Common myeloid progenitor, CD34-positive (primary cell): ENCODE measurements at regions of chr14 and their contacts with region 1.

Region 1: DNA sequence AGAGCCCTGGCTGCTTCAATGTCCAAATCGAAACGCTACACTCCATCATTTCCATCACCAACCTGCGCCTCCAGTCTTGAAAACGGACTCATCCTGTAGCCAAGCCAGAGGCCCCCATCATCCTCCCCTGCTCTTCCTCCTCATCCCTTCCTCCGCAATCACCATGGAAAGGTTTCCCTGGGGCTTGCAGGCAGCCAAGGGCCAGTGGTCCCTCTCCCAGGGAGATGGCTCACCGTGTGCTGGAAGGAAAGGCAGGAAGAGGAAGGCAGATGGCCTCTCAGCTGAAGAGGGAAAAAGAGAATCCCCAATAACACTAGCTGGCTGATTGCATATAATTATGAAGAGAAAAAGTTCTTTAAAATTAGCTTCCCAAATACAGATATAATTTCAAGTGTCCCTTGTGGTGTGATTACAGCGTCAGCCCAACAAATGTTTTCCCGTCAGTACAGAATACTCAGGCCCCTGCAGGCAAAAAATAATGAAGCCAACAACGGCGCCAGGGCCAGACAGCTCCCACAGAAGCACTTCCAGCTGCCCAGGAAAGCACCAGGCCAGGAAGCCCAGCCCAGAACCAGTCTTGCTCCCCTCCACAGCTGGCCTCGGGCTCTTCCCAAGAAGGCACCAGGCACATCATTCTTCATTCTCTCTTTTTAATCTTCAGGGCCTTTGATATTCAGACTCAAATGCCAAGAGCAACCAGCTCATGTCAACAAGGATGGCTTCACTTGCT is 24.7 kb downstream of the ITPK1 start:
- DNase-seq: no peak
- H3K4me3 ChIP-seq: no peak overlapping the region
- H3K27ac ChIP-seq: no peak overlapping the region
- H3K4me1 ChIP-seq: peaks cover 0 to 24% (median 11%) of the 10 kb centered on the region in 4 experiments
- H3K27me3 ChIP-seq: no peaks in the 10 kb centered on the region

Region 2: GRCh38 chr14:92922883-92923743 is 167.9 kb before region 1 on chr14 and contains the start of gene CHGA:
- CTCF ChIA-PET with region 1: no interaction called
- POLR2A ChIA-PET with region 1: no interaction called
- DNase-seq: peak; percentile 43 to 83 (median 82)
- H3K4me3 ChIP-seq: peak within 1 kb of the TSS in 1 of 7 experiments; percentile 39
- H3K27ac ChIP-seq: no peak within 1 kb of the TSS
- H3K4me1 ChIP-seq: peaks cover 0 to 7% (median 5%) of the 10 kb centered on the region in 4 experiments
- H3K27me3 ChIP-seq: peaks cover 2 to 54% (median 19%) of the 10 kb centered on the region in 5 experiments

Region 3: DNA sequence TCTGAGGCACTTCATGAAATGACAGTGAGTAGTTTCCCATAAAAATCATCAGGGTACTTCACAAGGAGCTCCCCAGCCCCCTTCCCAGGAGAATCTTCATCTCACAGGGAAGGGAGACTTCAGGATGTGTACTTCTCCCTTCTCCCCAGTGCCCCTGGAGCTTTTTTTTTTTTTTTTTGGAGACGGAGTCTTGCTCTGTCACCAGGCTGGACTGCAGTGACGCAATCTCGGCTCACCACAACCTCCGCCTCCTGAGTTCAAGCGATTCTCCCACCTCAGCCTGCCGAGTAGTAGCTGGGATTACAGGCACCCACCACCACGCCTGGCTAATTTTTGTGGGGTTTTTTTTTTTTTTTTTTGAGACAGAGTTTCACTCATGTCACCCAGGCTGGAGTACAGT is 14.4 kb after region 1 on chr14:
- CTCF ChIA-PET with region 1: interaction called, 11 read pairs
- POLR2A ChIA-PET with region 1: interaction called, 3 read pairs
- DNase-seq: peak; percentile 66 to 80 (median 73)
- H3K4me3 ChIP-seq: no peak overlapping the region
- H3K27ac ChIP-seq: no peak overlapping the region
- H3K4me1 ChIP-seq: peaks cover 5 to 68% (median 30%) of the 10 kb centered on the region in 4 experiments
- H3K27me3 ChIP-seq: no peaks in the 10 kb centered on the region